A673 (cell line): ENCODE measurements at regions of chr1 and their contacts with region 1.

Region 1: DNA sequence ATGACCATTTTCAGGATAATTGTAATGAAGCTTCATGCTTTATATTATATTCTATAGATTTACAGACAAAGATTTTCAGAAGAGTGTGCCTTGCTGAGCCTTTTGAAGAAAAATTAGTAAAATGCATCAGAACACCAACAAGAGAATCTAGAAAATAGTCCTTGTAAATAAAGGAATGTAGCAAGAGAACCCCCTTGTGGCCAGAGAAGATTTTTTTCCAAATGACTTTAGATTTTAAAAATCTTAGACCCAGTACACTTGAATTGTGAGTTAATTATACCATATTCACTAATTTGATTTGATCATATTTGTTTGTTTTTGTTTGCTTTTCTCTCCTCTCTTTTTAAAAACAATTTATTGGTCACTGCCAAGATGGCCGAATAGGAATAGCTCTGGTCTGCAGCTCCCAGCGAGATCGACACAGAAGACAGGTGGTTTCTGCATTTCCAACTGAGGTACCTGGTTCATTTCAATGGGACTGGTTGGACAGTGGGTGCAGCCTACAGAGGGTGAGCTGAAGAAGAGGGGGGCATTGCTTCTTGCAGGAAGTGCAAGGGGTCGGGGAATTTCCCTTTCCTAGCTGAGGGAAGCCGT is 12.8 kb upstream of the IFI44L start:
- DNase-seq: peak; percentile 54
- H3K4me3 ChIP-seq: no peak overlapping the region
- H3K27ac ChIP-seq: no peak overlapping the region
- H3K4me1 ChIP-seq: no peaks in the 10 kb centered on the region
- H3K27me3 ChIP-seq: no peaks in the 10 kb centered on the region
- CTCF ChIP-seq: peak; percentile 74

Region 2: DNA sequence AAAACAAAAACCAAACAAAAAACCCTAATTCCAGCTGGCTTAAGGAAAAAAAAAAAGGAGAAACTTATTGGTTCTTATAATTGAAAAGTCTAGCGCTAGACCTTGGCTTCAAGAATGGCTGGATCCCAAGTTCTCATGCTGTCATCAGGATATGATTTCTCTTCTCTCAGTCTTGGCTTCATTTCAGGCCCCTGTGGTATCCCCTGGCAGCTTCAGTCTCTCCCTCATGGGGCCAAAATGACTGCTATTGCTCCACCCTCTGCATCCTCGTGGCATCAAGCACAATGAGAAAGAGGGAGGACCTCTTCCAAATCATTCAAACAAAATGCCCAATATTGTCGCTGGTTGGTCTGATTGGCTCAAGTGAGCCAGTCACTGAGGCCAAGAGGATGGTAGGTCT is 480.9 kb before region 1 on chr1:
- CTCF ChIA-PET with region 1: interaction called, 4 read pairs
- POLR2A ChIA-PET with region 1: no interaction called
- intact Hi-C with region 1: loop called (anchors 1 kb)
- DNase-seq: no peak
- H3K4me3 ChIP-seq: no peak overlapping the region
- H3K27ac ChIP-seq: no peak overlapping the region
- H3K4me1 ChIP-seq: no peaks in the 10 kb centered on the region
- H3K27me3 ChIP-seq: no peaks in the 10 kb centered on the region
- CTCF ChIP-seq: no peak

Region 3: DNA sequence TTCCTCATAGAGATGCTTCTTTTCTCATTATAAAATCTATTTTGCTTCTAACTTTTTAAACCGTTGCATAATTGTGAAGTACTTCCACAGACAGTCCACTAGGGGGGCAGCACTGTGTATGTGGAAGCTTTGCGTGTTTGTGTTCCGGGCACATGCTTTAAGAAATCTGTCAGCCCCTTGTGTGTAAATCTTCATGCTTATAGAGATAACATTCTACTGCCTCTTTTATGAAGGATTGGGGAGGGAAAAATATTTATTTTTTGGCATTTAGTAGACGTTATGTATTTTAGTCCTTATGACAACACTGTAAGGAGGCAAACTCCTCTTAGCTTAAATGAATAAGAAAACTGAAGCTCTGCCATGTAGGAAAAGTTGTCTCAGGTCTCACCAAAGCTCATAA is 273.9 kb before region 1 on chr1:
- CTCF ChIA-PET with region 1: no interaction called
- POLR2A ChIA-PET with region 1: no interaction called
- intact Hi-C with region 1: loop called (anchors 10 kb)
- DNase-seq: peak; percentile 61
- H3K4me3 ChIP-seq: no peak overlapping the region
- H3K27ac ChIP-seq: no peak overlapping the region
- H3K4me1 ChIP-seq: no peaks in the 10 kb centered on the region
- H3K27me3 ChIP-seq: no peaks in the 10 kb centered on the region
- CTCF ChIP-seq: peak; percentile 90